Activated T-helper 1 cell treated with anti-CD3 and anti-CD28 coated beads, Interleukin-12 subunit alpha, Interleukin-12 subunit beta, Interleukin-2, Interleukin-4 antibody, amounts not matched to agents 30 ng/mL and 10 ng/mL and 1 ng/mL, durations not matched to agents 14 hours and 24 hours and 36 hours (primary cell): ENCODE measurements at regions of chr1 and their contacts with region 1.

Region 1: DNA sequence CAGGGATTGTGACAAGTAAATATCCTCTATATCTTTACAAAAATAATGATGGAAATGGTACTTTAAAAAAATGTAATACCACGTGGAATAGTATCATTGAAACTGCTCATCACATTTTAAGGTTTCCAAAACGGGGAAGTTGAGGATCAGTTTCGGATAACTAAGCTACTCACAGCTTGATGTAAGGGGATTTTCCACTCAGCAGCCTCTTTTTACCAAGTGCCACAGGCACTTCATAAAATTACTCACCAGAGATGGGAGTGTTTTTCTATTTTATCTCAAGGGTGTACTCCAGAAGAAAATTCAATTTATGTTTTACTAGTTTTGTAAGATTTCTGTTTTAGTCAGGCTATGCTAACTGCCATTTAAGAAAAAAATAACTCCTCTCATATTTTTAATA is 91.7 kb downstream of the TPR start:
- DNase-seq: no peak
- H3K4me3 Mint-ChIP-seq: peak overlapping the region; percentile 72
- H3K27ac Mint-ChIP-seq: peak overlapping the region; percentile 92
- H3K4me1 Mint-ChIP-seq: peaks cover 63% of the 10 kb centered on the region
- H3K27me3 Mint-ChIP-seq: no peaks in the 10 kb centered on the region

Region 2: DNA sequence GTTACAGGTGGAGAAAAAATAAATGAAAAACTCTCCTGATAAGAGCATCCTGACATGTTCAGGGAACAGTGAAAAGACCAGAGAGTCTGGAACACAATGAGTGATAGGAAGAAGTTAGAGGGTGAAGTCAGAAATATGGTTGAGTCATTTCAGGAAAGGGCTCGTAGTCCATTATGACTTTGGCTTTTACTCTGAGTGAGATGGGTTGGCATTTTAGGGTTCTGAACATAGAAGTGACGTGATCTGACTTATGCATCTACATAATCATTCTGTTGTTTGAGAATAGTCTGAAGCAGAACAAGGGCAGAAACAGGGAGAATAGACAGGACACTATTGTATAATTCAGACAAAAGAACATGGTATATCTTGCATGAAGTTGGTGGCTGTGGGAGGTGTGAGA is 543.4 kb before region 1 on chr1:
- intact Hi-C with region 1: loop called (anchors 5 kb)
- DNase-seq: no peak
- H3K4me3 Mint-ChIP-seq: no peak overlapping the region
- H3K27ac Mint-ChIP-seq: no peak overlapping the region
- H3K4me1 Mint-ChIP-seq: peaks cover 4% of the 10 kb centered on the region
- H3K27me3 Mint-ChIP-seq: peaks cover 26% of the 10 kb centered on the region